Activated CD8-positive, alpha-beta T cell treated with anti-CD3 and anti-CD28 coated beads for 36 hours (primary cell): ENCODE measurements at regions of chr3 and their contacts with region 1.

Region 1: DNA sequence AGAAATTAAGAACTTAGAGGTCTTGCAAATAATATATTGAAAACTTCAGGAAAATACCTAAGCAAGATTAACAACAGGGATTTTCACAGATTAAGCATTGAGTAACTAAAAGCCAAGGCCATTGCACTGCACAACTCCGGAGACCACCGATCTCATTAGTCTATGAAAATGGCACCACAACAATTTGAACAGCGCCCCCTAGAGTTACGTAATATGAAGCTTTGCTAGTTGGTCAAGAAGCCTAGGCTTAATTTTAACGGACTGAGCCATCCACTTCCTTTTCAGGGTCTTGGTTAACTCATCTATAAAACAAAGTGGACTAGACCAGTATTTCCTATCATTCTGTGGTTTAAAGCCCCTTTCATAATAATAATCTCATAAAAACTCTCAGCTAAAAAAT is 24.8 kb downstream of the TMEM212 start:
- DNase-seq: peak; percentile 5
- ATAC-seq: no peak
- H3K4me3 Mint-ChIP-seq: no peak overlapping the region
- H3K27ac Mint-ChIP-seq: no peak overlapping the region
- H3K4me1 Mint-ChIP-seq: peaks cover 2% of the 10 kb centered on the region
- H3K27me3 Mint-ChIP-seq: peaks cover 2% of the 10 kb centered on the region
- CTCF ChIP-seq: peak; percentile 50

Region 2: DNA sequence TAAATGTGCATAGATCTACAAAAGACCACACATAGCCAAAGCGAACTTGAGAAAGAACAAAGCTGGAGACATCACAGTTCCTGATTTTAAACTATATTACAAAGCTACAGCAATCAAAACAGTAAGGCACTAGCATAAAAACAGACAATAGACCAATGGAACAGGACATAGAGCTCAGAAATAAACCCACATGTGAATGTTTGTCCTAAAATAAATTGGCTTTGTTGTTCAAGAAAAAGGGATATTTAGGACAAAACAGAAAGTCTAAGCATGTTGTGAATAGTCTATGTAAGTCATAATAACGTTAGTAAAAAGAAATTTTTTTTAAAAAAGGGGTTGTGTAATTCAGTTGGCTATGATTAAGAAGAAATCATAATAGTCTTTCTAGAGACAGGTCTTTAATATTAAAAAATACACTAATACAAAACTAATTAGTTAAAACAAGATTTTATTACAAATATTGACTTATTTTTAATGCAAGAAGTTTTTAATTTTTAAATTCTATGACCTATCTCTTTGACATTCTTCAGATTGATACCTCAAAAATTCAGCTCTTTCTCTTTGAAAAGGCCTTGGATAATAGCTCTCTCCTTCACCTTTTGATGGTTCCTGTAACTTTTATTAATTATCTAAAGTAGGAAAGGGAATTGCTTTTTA is 13.2 kb before region 1 on chr3:
- CTCF ChIA-PET with region 1: interaction called, 11 read pairs
- POLR2A ChIA-PET with region 1: no interaction called
- intact Hi-C with region 1: no loop called
- DNase-seq: no peak
- ATAC-seq: no peak
- H3K4me3 Mint-ChIP-seq: no peak overlapping the region
- H3K27ac Mint-ChIP-seq: no peak overlapping the region
- H3K4me1 Mint-ChIP-seq: no peaks in the 10 kb centered on the region
- H3K27me3 Mint-ChIP-seq: peaks cover 17% of the 10 kb centered on the region
- CTCF ChIP-seq: no peak